Spleen (tissue), 13 donors: ENCODE measurements at regions of chr20 and their contacts with region 1.

Region 1: GRCh38 chr20:31560094-31560899 is 44.8 kb upstream of the ID1 start:
- DNase-seq: peak; percentile 92
- H3K4me3 ChIP-seq: peak overlapping the region in 1 of 8 donors; percentile 26
- H3K27ac ChIP-seq: peak overlapping the region in 7 of 8 donors; percentile 39 to 85 (median 79)
- H3K4me1 ChIP-seq: peaks cover 0 to 32% (median 19%) of the 10 kb centered on the region in 6 donors
- H3K27me3 ChIP-seq: no peaks in the 10 kb centered on the region
- CTCF ChIP-seq: peak; percentile 73 to 94 (median 89)
- POLR2A ChIP-seq: no peak

Region 2: DNA sequence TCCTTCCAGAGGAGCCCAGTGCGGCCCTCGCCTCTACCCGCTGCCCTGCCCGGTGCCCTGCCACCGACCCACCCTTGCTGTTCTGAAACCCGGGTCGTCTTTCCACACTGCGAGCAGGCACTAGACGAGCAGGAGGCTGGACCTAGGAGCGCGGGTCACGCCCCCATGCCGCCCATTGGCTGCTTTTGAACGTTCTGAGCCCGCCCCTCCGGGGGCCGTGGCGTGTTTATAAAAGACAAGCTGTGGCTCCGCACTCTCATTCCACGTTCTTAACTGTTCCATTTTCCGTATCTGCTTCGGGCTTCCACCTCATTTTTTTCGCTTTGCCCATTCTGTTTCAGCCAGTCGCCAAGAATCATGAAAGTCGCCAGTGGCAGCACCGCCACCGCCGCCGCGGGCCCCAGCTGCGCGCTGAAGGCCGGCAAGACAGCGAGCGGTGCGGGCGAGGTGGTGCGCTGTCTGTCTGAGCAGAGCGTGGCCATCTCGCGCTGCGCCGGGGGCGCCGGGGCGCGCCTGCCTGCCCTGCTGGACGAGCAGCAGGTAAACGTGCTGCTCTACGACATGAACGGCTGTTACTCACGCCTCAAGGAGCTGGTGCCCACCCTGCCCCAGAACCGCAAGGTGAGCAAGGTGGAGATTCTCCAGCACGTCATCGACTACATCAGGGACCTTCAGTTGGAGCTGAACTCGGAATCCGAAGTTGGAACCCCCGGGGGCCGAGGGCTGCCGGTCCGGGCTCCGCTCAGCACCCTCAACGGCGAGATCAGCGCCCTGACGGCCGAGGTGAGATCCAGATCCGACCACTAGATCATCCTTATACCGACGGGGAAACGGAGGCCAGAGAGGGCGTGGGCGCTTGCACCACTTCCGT is 45.0 kb after region 1 on chr20 and contains the start of gene ID1:
- intact Hi-C with region 1: loop called (anchors 5 kb)
- DNase-seq: peak; percentile 97
- H3K4me3 ChIP-seq: peak within 1 kb of the TSS; percentile 65 to 94 (median 87)
- H3K27ac ChIP-seq: peak within 1 kb of the TSS; percentile 80 to 91 (median 86)
- H3K4me1 ChIP-seq: peaks cover 14 to 79% (median 64%) of the 10 kb centered on the region in 6 donors
- H3K27me3 ChIP-seq: peaks cover 0 to 82% (median 18%) of the 10 kb centered on the region in 7 donors
- CTCF ChIP-seq: peak in 3 of 11 experiments; percentile 13 to 33 (median 18)
- POLR2A ChIP-seq: peak in 1 of 3 donors; percentile 88
- total RNA-seq, gene ID1: 77.1 to 222 (median 124) TPM

Region 3: GRCh38 chr20:31731321-31731717 is 171.0 kb after region 1 on chr20:
- intact Hi-C with region 1: no loop called
- DNase-seq: no peak
- H3K4me3 ChIP-seq: no peak overlapping the region
- H3K27ac ChIP-seq: no peak overlapping the region
- H3K4me1 ChIP-seq: peaks cover 0 to 4% (median 0%) of the 10 kb centered on the region in 6 donors
- H3K27me3 ChIP-seq: no peaks in the 10 kb centered on the region
- CTCF ChIP-seq: no peak
- POLR2A ChIP-seq: no peak